GM10248 (cell line): ENCODE measurements at regions of chr5 and their contacts with region 1.

Region 1: GRCh38 chr5:129652349-129653069 is 95.4 kb upstream of the MINAR2 start:
- DNase-seq: no peak
- CTCF ChIP-seq: no peak

Region 2: DNA sequence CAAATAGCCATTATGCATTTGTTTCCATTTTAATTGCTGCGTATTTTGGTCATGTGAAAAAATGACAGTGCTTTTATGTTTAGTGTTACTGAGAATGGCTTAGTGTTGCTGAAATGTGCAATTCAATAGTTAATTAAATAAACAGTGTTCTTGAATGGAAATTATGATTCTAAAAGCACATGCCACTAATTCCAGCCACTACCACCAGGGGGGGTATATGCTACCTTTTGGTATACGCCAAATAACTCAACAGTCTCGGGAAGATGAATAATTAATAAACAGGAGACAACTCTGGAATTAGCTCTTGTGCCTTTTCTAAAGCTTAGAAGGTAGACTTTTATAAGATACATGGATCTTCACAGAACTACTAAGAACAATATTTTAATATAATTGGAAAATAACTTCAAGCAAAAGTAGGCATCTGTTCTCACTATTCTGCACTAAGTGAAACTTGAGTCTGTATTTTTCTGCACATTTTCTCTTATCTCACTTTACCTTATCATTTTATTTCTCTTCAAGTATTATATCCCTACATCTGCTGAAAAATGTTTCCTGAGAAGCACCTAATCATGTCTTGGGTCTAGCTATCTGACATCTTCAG is 11.9 kb after region 1 on chr5:
- CTCF ChIA-PET with region 1: interaction called, 19 read pairs
- POLR2A ChIA-PET with region 1: no interaction called
- DNase-seq: peak; percentile 18
- CTCF ChIP-seq: peak; percentile 67